Activated CD4-positive, alpha-beta memory T cell treated with anti-CD3 and anti-CD28 coated beads, Interleukin-2, amount 10 ng/mL, durations not matched to agents 7 days and 5 days (primary cell): ENCODE measurements at regions of chr10 and their contacts with region 1.

Region 1: DNA sequence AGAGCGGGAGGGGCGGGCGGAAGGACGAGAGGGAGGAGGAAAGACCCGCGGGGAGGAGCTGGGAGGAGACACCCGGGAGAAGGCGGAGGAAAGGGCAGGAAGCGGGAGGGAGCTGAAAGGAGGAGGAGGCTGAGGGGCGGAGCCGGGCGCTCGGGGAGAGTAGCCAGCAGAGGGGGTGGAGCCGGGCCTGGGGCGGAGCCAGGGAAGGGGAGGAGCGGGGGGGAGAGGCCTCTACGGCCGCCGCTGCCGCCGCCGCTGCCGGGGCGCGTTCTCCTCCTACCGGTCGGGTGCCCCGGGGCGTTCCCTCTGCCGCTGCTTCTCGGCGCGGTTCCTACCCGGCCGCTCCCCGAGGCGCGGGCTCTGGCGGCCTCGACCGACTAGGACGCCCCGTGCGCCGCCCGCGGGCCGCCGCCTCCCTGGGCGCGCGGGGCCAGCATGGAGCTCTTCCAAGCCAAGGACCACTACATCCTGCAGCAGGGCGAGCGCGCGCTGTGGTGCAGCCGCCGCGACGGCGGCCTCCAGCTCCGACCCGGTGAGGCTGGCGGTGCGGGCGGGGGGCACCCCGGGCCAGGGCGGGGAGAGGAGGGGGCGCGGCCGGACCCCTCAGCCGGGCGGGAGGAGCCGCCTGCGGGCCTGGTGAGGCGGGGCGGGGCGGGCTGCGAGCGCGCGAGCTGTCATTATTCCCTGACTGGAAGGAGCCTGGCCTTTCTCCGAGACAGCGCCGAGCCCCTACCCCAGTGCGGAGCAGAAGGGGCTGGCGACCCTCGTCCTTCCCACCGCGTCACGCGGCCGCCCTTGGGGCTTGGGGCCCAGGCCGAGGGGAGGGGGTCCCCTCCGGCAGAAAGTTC is at the start of gene INPP5F:
- DNase-seq: peak; percentile 99
- H3K4me3 Mint-ChIP-seq: peak within 1 kb of the TSS; percentile 86
- H3K27ac Mint-ChIP-seq: peak within 1 kb of the TSS; percentile 71
- H3K4me1 Mint-ChIP-seq: peaks cover 37% of the 10 kb centered on the region
- H3K27me3 Mint-ChIP-seq: peaks cover 2% of the 10 kb centered on the region
- total RNA-seq, gene INPP5F: 11.8 to 15.0 TPM

Region 2: GRCh38 chr10:119663866-119664616 is 62.0 kb before region 1 on chr10:
- CTCF ChIA-PET with region 1: no interaction called
- POLR2A ChIA-PET with region 1: interaction called, 11 read pairs
- DNase-seq: peak; percentile 72
- H3K4me3 Mint-ChIP-seq: peak overlapping the region; percentile 67
- H3K27ac Mint-ChIP-seq: peak overlapping the region; percentile 95
- H3K4me1 Mint-ChIP-seq: peaks cover 45% of the 10 kb centered on the region
- H3K27me3 Mint-ChIP-seq: no peaks in the 10 kb centered on the region

Region 3: GRCh38 chr10:119705434-119705831 is 20.6 kb before region 1 on chr10:
- CTCF ChIA-PET with region 1: interaction called, 34 read pairs
- POLR2A ChIA-PET with region 1: interaction called, 68 read pairs
- DNase-seq: no peak
- H3K4me3 Mint-ChIP-seq: peak overlapping the region; percentile 72
- H3K27ac Mint-ChIP-seq: peak overlapping the region; percentile 92
- H3K4me1 Mint-ChIP-seq: peaks cover 57% of the 10 kb centered on the region
- H3K27me3 Mint-ChIP-seq: no peaks in the 10 kb centered on the region

Region 4: DNA sequence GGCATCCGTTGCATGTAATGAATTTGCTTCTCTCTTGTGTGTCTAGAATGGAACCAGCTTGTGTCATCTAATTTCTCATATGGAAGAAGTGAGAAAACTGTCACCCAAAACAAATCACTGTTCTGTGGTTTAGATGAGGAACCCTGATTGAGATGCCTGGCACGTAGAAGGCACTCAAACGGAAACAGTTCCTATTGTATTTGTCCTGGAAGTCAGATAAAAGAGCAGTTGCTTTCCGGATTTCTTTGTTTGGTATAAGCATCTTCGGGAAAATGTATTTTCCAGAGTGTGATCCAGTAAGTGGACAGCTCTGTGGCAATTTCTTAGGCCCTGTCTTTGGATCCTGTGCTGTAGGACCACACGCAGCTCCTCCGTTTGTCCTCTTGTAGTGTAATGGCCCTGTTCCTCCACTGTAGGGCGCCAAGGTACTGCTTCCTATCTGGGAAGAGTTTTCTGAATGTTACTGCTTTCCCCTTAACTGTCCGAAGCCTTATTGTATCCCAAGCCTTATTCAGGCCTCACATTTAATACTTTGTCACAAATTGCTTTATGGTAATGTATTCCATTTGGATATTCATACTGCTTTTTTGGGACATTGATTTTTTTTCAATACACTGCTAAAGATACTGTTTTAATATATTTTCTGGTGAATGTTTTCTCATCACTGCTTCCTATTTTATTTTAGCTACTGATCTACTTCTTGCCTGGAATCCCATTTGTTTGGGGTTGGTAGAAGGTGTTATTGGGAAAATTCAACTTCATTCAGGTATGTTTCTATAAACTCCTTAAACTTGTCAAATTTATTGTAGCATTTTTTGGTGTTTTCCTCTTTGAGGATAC is 24.6 kb after region 1 on chr10:
- CTCF ChIA-PET with region 1: interaction called, 13 read pairs
- POLR2A ChIA-PET with region 1: interaction called, 3 read pairs
- DNase-seq: peak; percentile 69
- H3K4me3 Mint-ChIP-seq: no peak overlapping the region
- H3K27ac Mint-ChIP-seq: no peak overlapping the region
- H3K4me1 Mint-ChIP-seq: peaks cover 5% of the 10 kb centered on the region
- H3K27me3 Mint-ChIP-seq: no peaks in the 10 kb centered on the region